B cell (primary cell): ENCODE measurements at regions of chr17 and their contacts with region 1.

Region 1: DNA sequence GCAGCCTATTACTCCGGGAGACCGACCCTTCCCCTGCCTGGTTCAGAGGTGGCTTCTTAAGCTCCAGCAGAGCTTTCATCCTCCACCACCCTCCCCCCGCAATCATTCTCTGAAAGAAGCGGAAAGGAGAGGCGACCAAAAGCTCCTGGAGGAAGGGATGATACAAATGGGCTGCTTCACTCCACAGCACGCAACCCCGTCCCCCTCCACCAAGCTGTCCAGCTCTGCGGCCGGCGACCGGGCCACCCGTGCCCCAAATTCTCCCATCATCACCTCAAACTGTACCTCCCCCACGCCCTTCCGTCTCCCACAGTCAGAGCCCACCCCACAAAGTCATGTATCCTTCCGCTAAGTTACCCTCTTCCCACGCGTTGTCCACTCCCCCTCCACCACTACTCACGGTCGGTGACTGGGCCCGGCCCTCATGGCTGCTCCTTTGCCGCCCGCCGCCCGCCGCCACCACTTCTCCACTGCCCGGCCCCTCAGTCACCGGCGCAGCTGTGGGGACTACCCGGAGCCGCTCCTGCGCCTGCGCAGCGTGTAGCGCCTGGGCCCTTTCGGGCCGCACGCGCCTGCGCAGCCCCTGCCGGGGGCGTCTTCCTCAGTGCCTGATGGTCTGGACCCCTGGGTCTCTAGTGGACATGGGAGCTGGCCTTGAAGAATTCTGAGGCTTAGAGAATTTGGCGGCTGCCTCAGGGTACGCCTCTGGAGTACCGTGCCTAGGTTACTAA is at the start of gene FAM222B:
- DNase-seq: peak; percentile 91
- ATAC-seq: peak; percentile 98
- H3K4me3 ChIP-seq: peak within 1 kb of the TSS; percentile 67 to 92 (median 87)
- H3K4me3 Mint-ChIP-seq: peak within 1 kb of the TSS; percentile 97
- H3K27ac ChIP-seq: peak within 1 kb of the TSS; percentile 70 to 87
- H3K27ac Mint-ChIP-seq: peak within 1 kb of the TSS; percentile 96
- H3K4me1 ChIP-seq: peaks cover 10 to 15% of the 10 kb centered on the region in 2 donors
- H3K4me1 Mint-ChIP-seq: peaks cover 23% of the 10 kb centered on the region
- H3K27me3 ChIP-seq: no peaks in the 10 kb centered on the region
- H3K27me3 Mint-ChIP-seq: no peaks in the 10 kb centered on the region
- CTCF ChIP-seq: no peak
- total RNA-seq, gene FAM222B: 21.9 and 23.1 TPM in 2 replicates

Region 2: DNA sequence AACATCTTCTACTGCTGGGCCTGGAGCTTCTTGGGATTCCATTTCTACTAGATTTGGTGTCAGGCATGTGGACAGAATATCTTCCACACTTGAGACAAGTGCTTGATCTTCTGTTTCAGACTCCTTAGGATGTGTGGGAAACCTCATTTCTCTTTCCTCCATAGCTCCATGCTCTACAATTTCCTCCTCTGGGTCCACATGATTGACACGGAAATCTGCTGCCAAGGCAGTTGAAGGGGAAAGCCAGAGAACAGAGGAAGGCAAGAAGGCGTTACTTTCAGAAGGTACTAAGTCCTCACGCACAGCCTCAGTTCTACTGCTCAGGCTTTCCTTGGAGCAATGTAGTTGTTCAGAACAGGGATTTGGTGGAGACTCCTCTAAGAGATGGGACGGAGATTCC is 250.2 kb before region 1 on chr17:
- CTCF ChIA-PET with region 1: no interaction called
- POLR2A ChIA-PET with region 1: no interaction called
- intact Hi-C with region 1: no loop called
- DNase-seq: no peak
- ATAC-seq: no peak
- H3K4me3 ChIP-seq: no peak overlapping the region
- H3K4me3 Mint-ChIP-seq: no peak overlapping the region
- H3K27ac ChIP-seq: no peak overlapping the region
- H3K27ac Mint-ChIP-seq: no peak overlapping the region
- H3K4me1 ChIP-seq: no peaks in the 10 kb centered on the region
- H3K4me1 Mint-ChIP-seq: peaks cover under 1% of the 10 kb centered on the region
- H3K27me3 ChIP-seq: no peaks in the 10 kb centered on the region
- H3K27me3 Mint-ChIP-seq: no peaks in the 10 kb centered on the region
- CTCF ChIP-seq: no peak

Region 3: DNA sequence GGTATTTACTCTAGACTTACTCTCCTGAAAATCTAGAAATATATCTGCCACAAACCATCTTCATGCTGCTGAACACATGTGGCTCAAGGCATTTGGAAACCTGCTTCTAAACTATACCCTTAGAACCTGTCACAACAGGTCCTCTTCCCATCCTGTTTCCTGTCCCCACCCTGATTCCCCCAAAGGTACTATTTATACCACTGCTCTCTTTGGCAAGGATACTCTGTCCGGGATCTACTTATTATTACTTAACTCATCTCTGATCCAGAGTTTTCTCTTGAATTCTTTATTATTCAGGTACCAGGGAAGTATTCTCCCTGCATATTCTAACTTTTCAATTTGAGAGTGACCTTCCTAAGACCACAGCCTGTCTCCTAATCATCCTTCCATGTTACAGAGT is 65.3 kb before region 1 on chr17:
- CTCF ChIA-PET with region 1: no interaction called
- POLR2A ChIA-PET with region 1: no interaction called
- intact Hi-C with region 1: loop called (anchors 10 kb)
- DNase-seq: no peak
- ATAC-seq: no peak
- H3K4me3 ChIP-seq: no peak overlapping the region
- H3K4me3 Mint-ChIP-seq: no peak overlapping the region
- H3K27ac ChIP-seq: peak overlapping the region in 1 of 2 donors; percentile 2
- H3K27ac Mint-ChIP-seq: peak overlapping the region; percentile 55
- H3K4me1 ChIP-seq: peaks cover 0 to 4% of the 10 kb centered on the region in 2 donors
- H3K4me1 Mint-ChIP-seq: peaks cover 31% of the 10 kb centered on the region
- H3K27me3 ChIP-seq: no peaks in the 10 kb centered on the region
- H3K27me3 Mint-ChIP-seq: no peaks in the 10 kb centered on the region
- CTCF ChIP-seq: no peak

Region 4: GRCh38 chr17:28812091-28812747 is 30.2 kb before region 1 on chr17:
- CTCF ChIA-PET with region 1: interaction called, 3 read pairs
- POLR2A ChIA-PET with region 1: interaction called, 4 read pairs
- intact Hi-C with region 1: loop called (anchors 1 kb)
- DNase-seq: peak; percentile 95
- ATAC-seq: peak; percentile 99
- H3K4me3 ChIP-seq: peak overlapping the region; percentile 48 to 92 (median 77)
- H3K4me3 Mint-ChIP-seq: peak overlapping the region; percentile 92
- H3K27ac ChIP-seq: peak overlapping the region; percentile 87
- H3K27ac Mint-ChIP-seq: peak overlapping the region; percentile 92
- H3K4me1 ChIP-seq: peaks cover 12 to 16% of the 10 kb centered on the region in 2 donors
- H3K4me1 Mint-ChIP-seq: peaks cover 34% of the 10 kb centered on the region
- H3K27me3 ChIP-seq: no peaks in the 10 kb centered on the region
- H3K27me3 Mint-ChIP-seq: no peaks in the 10 kb centered on the region
- CTCF ChIP-seq: no peak

Region 5: GRCh38 chr17:28854457-28855350 is 12.3 kb after region 1 on chr17 and contains the start of gene ERAL1:
- CTCF ChIA-PET with region 1: interaction called, 5 read pairs
- POLR2A ChIA-PET with region 1: interaction called, 4 read pairs
- intact Hi-C with region 1: loop called (anchors 1 kb)
- DNase-seq: peak; percentile 88
- ATAC-seq: peak; percentile 99
- H3K4me3 ChIP-seq: peak within 1 kb of the TSS; percentile 61 to 93 (median 82)
- H3K4me3 Mint-ChIP-seq: peak within 1 kb of the TSS; percentile 96
- H3K27ac ChIP-seq: peak within 1 kb of the TSS; percentile 59 to 75
- H3K27ac Mint-ChIP-seq: peak within 1 kb of the TSS; percentile 90
- H3K4me1 ChIP-seq: peaks cover 10 to 16% of the 10 kb centered on the region in 2 donors
- H3K4me1 Mint-ChIP-seq: peaks cover 17% of the 10 kb centered on the region
- H3K27me3 ChIP-seq: no peaks in the 10 kb centered on the region
- H3K27me3 Mint-ChIP-seq: no peaks in the 10 kb centered on the region
- CTCF ChIP-seq: no peak
- total RNA-seq, gene ERAL1: 35.9 and 39.5 TPM in 2 replicates

Region 6: DNA sequence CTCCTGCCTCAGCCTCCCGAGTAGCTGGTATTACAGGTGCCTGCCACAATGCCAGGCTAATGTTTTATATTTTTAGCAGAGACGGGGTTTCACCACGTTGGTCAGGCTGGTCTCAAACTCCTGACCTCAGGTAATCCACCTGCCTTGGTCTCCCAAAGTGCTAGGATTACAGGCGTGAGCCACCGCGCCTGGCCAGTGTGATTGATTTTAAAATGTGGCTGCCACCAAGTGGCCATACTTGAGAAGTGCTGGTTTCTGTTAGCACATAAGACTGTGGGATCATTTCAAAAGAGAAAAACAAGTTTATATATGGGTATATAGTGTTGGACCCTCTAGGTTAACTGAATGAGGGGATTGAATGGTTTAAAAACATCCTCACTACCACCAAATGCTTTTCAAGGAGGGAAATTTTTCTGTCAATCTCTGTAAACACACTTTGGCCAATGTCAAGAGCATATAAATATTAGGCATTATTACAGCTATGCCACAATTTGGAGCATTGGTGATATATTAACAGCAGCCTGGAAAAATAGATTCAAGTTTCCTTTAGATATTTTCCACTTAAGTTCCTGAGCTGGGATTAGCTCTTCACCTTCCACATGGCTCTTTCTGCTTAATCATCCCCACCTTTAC is 74.0 kb after region 1 on chr17:
- CTCF ChIA-PET with region 1: interaction called, 10 read pairs
- POLR2A ChIA-PET with region 1: interaction called, 4 read pairs
- intact Hi-C with region 1: no loop called
- DNase-seq: peak; percentile 60
- ATAC-seq: peak; percentile 80
- H3K4me3 ChIP-seq: no peak overlapping the region
- H3K4me3 Mint-ChIP-seq: no peak overlapping the region
- H3K27ac ChIP-seq: no peak overlapping the region
- H3K27ac Mint-ChIP-seq: no peak overlapping the region
- H3K4me1 ChIP-seq: no peaks in the 10 kb centered on the region
- H3K4me1 Mint-ChIP-seq: no peaks in the 10 kb centered on the region
- H3K27me3 ChIP-seq: no peaks in the 10 kb centered on the region
- H3K27me3 Mint-ChIP-seq: no peaks in the 10 kb centered on the region
- CTCF ChIP-seq: peak; percentile 82